Cardiac septum (tissue), 1 donor: ENCODE measurements at regions of chr9 and their contacts with region 1.

Region 1: GRCh38 chr9:115591584-115591984 is 473.6 kb upstream of the TNC start:
- DNase-seq: no peak

Region 2: DNA sequence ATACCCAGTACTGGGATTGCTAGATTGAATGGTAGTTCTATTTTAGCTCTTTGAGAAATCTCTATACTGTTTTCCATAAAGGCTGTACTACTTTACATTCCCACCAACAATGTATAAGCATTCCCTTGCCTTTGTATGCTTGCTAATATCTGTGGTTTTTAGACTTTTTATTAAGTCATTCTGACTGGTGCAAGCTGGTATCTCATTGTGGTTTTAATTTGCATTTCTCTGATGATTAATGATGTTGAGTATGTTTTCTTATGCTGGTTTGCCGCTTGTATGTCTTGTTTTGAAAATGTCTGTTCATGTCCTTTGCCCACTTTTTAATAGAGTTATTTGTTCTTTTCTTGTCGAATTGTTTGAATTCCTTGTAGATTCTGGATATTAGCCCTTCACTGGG is 49.3 kb after region 1 on chr9:
- intact Hi-C with region 1: no loop called
- DNase-seq: no peak

Region 3: DNA sequence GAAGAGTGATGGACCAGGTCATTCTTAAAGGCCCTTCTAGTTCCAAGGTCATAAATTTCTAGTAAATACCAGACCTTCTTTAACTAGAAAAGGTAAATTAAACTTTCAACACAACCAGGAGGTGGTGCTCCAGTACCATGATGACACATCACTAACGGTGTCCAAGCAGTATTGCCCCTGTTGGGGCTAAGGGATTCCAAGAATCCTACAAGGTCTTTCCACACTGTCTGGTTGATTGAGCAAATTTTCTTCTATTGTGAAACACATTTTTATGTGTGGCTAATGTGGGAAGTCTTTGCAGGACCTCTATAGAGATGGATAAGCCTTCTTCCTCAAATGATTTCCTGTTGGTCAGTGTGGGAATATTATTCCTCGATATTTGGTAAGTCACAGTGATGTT is 102.4 kb after region 1 on chr9:
- intact Hi-C with region 1: loop called (anchors 10 kb)
- DNase-seq: no peak

Region 4: GRCh38 chr9:116656501-116656971 is 1065.0 kb after region 1 on chr9:
- intact Hi-C with region 1: loop called (anchors 5 kb)
- DNase-seq: no peak